ENCODE measurements at regions of chr14 and their contacts with region 1.

Region 1: DNA sequence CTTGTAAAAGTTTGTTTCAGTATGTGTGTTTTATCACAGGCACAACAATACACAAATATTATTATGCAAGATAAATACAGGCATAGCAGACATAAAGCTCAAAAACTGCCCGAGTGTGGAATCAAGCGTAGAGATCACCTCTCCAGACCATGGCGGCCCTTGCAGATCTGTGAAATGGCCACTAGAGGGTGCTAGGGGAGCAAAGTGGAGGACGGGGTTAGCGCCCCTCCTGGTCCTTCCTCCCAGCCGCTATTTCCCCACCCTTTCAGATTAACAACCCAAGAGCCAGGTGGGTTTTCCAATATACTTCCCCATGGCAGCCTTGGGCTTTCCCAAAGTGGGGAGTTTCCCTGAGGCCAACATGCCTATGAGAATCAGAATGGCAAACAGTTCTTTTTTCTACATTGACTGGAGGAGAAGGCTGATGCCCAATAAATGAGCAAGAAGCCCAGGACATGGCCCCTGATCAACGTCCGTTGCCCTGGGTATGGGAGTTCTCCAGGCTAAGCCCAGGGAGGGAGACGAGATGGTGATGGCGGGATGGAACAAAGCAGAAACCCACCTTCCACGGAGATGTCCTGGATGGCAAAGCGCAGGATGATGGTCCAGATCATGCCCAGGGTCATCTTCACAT is 67.4 kb downstream of the ACTN1 start:
- H3K4me3 ChIP-seq: no peak overlapping the region
- H3K27ac ChIP-seq: no peak overlapping the region
- H3K4me1 ChIP-seq: no peaks in the 10 kb centered on the region
- CTCF ChIP-seq: peak; percentile 81

Region 2: GRCh38 chr14:68824517-68825347 is 87.0 kb before region 1 on chr14:
- CTCF ChIA-PET with region 1: no interaction called
- POLR2A ChIA-PET with region 1: no interaction called
- H3K4me3 ChIP-seq: no peak overlapping the region
- H3K27ac ChIP-seq: no peak overlapping the region; the same call in 1 of the 2 replicates
- H3K4me1 ChIP-seq: peaks cover 2% of the 10 kb centered on the region; the same call in 1 of the 2 replicates
- CTCF ChIP-seq: peak; percentile 75; the same call in 1 of the 2 replicates

Region 3: DNA sequence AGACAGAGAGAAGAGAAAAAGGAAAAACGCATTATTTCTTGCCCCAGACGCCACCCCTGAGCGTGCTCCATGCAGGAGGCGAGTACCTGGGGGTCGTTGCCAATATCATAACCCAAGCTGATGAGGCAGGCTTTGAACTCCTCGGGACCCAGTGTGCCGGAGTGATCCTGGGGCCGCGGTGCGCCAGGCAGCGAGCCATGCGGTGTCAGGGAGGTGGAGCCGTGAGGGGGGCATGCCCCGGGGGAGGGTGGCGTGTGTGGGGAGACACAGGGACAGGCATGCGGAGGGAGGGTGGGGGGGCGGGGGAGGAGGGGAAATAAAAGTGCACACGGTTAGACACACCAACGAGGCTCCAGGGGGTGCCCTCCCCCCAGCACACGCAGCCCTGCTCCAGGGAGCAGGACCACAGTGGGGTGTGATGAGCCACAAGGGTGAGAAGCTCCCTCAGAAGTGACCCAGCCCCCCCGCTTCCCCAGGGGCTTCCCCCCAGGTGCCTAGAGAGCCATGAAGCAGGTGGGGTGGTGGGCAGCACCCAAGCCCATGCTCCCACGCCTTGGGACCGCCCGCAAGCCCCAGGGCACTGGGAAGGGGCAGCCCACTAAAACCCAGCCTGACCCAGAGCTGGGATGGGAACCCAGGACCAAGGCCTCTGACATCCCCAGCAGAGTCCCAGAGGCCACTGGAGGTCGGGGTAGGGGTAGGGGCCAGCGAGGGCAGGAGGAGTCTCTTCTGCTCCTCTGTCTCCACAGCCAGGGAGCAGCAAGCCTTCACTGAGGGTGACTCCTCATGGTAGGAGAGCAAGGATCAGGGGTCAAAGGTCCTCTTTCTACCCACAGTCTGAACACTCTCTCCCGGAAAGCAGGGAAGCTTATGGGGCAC is 32.6 kb before region 1 on chr14:
- CTCF ChIA-PET with region 1: no interaction called
- POLR2A ChIA-PET with region 1: no interaction called
- H3K4me3 ChIP-seq: no peak overlapping the region
- H3K27ac ChIP-seq: no peak overlapping the region
- H3K4me1 ChIP-seq: no peaks in the 10 kb centered on the region
- CTCF ChIP-seq: no peak

Region 4: GRCh38 chr14:68926236-68926635 is 14.5 kb after region 1 on chr14:
- CTCF ChIA-PET with region 1: interaction called, 33 read pairs
- POLR2A ChIA-PET with region 1: no interaction called
- H3K4me3 ChIP-seq: no peak overlapping the region
- H3K27ac ChIP-seq: no peak overlapping the region
- H3K4me1 ChIP-seq: no peaks in the 10 kb centered on the region; the same call in 1 of the 2 replicates
- CTCF ChIP-seq: no peak

Region 5: GRCh38 chr14:68955164-68955921 is 43.6 kb after region 1 on chr14:
- CTCF ChIA-PET with region 1: interaction called, 14 read pairs
- POLR2A ChIA-PET with region 1: no interaction called
- H3K4me3 ChIP-seq: no peak overlapping the region
- H3K27ac ChIP-seq: no peak overlapping the region
- H3K4me1 ChIP-seq: peaks cover 2% of the 10 kb centered on the region
- CTCF ChIP-seq: no peak

Region 6: GRCh38 chr14:69090187-69090789 is 178.6 kb after region 1 on chr14:
- CTCF ChIA-PET with region 1: interaction called, 21 read pairs
- POLR2A ChIA-PET with region 1: no interaction called
- H3K4me3 ChIP-seq: no peak overlapping the region
- H3K27ac ChIP-seq: no peak overlapping the region
- H3K4me1 ChIP-seq: 0 out of 2 replicates have a peak, but pooled peaks cover 7% of the 10 kb centered on the region
- CTCF ChIP-seq: no peak

Region 7: DNA sequence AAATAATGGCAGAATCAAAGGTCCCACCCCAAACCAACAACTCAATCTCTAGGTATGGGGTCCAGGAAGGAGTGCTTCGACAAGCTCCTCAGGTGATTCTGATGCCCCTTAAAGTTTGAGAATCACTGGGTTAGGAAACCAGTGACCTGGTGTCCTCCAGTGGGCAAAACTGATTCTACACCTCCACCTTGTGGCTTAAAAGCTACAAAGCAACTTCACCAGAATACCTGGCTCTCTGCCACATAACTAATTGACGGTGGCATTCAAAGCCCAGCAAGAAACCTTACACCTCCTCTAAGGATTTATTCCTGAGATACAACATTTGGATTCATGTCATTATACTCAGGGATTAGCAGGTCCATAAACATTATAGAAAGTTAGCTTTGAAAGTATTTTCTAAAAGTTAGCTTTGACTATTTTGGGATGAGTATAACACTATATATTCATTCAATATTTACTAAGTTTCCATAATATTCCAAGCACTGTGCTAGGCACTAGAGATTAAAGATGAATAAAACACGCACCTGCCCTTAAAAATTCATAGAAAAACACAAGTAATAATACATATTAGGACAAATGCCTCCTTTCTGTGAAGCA is 195.8 kb after region 1 on chr14:
- CTCF ChIA-PET with region 1: interaction called, 98 read pairs
- POLR2A ChIA-PET with region 1: no interaction called
- H3K4me3 ChIP-seq: no peak overlapping the region
- H3K27ac ChIP-seq: no peak overlapping the region
- H3K4me1 ChIP-seq: peaks cover 5% of the 10 kb centered on the region; the same call in 1 of the 2 replicates
- CTCF ChIP-seq: peak; percentile 30; the same call in 1 of the 2 replicates

Measured in HEK293 (cell line).